CD4-positive, alpha-beta T cell (primary cell): ENCODE measurements at regions of chr1 and their contacts with region 1.

Region 1: GRCh38 chr1:159132271-159132881 is 39.0 kb upstream of the CADM3 start:
- DNase-seq: peak; percentile 38 to 72 (median 54)
- ATAC-seq: no peak
- H3K4me3 ChIP-seq: no peak overlapping the region
- H3K4me3 Mint-ChIP-seq: no peak overlapping the region
- H3K27ac ChIP-seq: no peak overlapping the region
- H3K27ac Mint-ChIP-seq: no peak overlapping the region
- H3K4me1 ChIP-seq: no peaks in the 10 kb centered on the region
- H3K4me1 Mint-ChIP-seq: no peaks in the 10 kb centered on the region
- H3K27me3 ChIP-seq: peaks cover 4 to 14% of the 10 kb centered on the region in 2 experiments
- H3K27me3 Mint-ChIP-seq: peaks cover 13% of the 10 kb centered on the region
- CTCF ChIP-seq: peak; percentile 86

Region 2: DNA sequence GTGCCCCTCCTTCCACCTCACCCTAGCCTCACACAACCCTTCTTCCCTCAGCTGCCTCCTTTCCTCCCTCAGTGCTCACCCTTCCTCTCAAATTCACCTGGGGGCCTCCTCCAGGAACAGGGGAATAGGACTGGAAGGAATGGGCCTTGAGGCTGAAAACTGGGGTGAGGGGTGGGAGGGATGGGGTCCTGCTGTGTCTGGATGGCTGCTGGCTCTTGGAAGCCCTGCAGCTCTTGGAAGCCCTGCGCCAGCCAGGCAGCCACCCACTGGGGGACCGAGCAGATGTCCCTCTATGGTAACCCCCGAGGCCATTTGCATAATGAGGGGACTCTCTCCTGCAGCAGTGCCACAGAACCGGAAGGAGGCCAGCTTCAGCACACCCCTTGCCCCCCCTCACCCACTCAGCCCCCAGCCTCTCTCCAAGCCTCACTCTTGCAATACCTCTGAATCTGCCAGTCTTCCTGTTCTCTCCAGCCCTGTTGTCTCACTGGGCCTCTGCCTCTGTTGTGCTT is 1053.8 kb before region 1 on chr1:
- CTCF ChIA-PET with region 1: no interaction called
- POLR2A ChIA-PET with region 1: no interaction called
- intact Hi-C with region 1: no loop called
- DNase-seq: no peak
- ATAC-seq: no peak
- H3K4me3 ChIP-seq: no peak overlapping the region
- H3K4me3 Mint-ChIP-seq: no peak overlapping the region
- H3K27ac ChIP-seq: no peak overlapping the region
- H3K27ac Mint-ChIP-seq: no peak overlapping the region
- H3K4me1 ChIP-seq: no peaks in the 10 kb centered on the region
- H3K4me1 Mint-ChIP-seq: no peaks in the 10 kb centered on the region
- H3K27me3 ChIP-seq: no peaks in the 10 kb centered on the region
- H3K27me3 Mint-ChIP-seq: no peaks in the 10 kb centered on the region
- CTCF ChIP-seq: no peak

Region 3: DNA sequence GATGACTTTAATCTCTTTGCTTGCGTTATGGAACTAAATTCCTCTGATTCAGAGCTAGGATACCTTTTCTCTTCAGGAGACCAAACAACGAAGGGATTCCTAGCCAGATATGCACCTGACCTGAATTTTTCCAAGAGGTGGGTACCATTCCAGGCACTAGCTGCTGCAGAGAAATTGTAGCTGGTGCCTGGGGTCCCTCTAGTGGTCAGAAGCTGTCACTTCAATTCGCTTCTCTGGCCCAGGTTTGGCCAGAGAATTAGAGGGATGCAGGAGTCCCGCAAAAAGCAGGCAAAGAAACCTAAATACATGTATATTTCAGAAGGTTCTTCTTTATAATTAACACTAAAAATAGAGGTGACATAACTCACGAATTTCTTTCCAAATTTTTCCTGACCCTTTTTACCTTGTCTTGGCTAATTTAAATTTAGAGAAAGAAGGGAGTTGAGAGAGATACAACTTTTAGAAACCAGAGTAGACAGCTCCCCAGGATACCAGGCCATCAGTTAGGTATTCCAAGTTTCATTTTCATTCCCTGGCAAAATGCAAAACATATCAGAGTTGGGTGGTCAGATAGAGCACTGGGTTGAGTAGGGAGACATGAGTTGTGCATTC is 81.9 kb after region 1 on chr1:
- CTCF ChIA-PET with region 1: interaction called, 7 read pairs
- POLR2A ChIA-PET with region 1: no interaction called
- intact Hi-C with region 1: loop called (anchors 1 to 5 kb)
- DNase-seq: peak in 10 of 14 experiments; percentile 4 to 62 (median 16)
- ATAC-seq: no peak
- H3K4me3 ChIP-seq: no peak overlapping the region
- H3K4me3 Mint-ChIP-seq: no peak overlapping the region
- H3K27ac ChIP-seq: no peak overlapping the region
- H3K27ac Mint-ChIP-seq: no peak overlapping the region
- H3K4me1 ChIP-seq: no peaks in the 10 kb centered on the region
- H3K4me1 Mint-ChIP-seq: no peaks in the 10 kb centered on the region
- H3K27me3 ChIP-seq: peaks cover 5 to 9% of the 10 kb centered on the region in 2 experiments
- H3K27me3 Mint-ChIP-seq: peaks cover 73% of the 10 kb centered on the region
- CTCF ChIP-seq: peak; percentile 98

Region 4: GRCh38 chr1:159945483-159946241 is 813.3 kb after region 1 on chr1 and contains the start of gene IGSF9:
- CTCF ChIA-PET with region 1: no interaction called
- POLR2A ChIA-PET with region 1: no interaction called
- intact Hi-C with region 1: loop called in 1 of 2 experiments (anchors 5 kb)
- DNase-seq: peak; percentile 53 to 89 (median 72)
- ATAC-seq: peak; percentile 97
- H3K4me3 ChIP-seq: peak within 1 kb of the TSS; percentile 46
- H3K4me3 Mint-ChIP-seq: peak within 1 kb of the TSS; percentile 62
- H3K27ac ChIP-seq: no peak within 1 kb of the TSS
- H3K27ac Mint-ChIP-seq: no peak within 1 kb of the TSS
- H3K4me1 ChIP-seq: peaks cover 15% of the 10 kb centered on the region
- H3K4me1 Mint-ChIP-seq: peaks cover 10% of the 10 kb centered on the region
- H3K27me3 ChIP-seq: peaks cover 22 to 26% of the 10 kb centered on the region in 2 experiments
- H3K27me3 Mint-ChIP-seq: peaks cover 42% of the 10 kb centered on the region
- CTCF ChIP-seq: peak; percentile 63
- total RNA-seq, gene IGSF9: not detected